HEK293 (cell line): ENCODE measurements at regions of chr2 and their contacts with region 1.

Region 1: GRCh38 chr2:181742922-181743722 is 62.8 kb upstream of the NEUROD1 start:
- H3K4me3 ChIP-seq: no peak overlapping the region
- H3K27ac ChIP-seq: no peak overlapping the region
- H3K4me1 ChIP-seq: no peaks in the 10 kb centered on the region
- CTCF ChIP-seq: peak; percentile 66

Region 2: GRCh38 chr2:181904022-181904632 is 161.0 kb after region 1 on chr2:
- CTCF ChIA-PET with region 1: interaction called, 35 read pairs
- POLR2A ChIA-PET with region 1: no interaction called
- H3K4me3 ChIP-seq: no peak overlapping the region
- H3K27ac ChIP-seq: no peak overlapping the region
- H3K4me1 ChIP-seq: peaks cover 7% of the 10 kb centered on the region; the same call in 1 of the 2 replicates
- CTCF ChIP-seq: no peak

Region 3: DNA sequence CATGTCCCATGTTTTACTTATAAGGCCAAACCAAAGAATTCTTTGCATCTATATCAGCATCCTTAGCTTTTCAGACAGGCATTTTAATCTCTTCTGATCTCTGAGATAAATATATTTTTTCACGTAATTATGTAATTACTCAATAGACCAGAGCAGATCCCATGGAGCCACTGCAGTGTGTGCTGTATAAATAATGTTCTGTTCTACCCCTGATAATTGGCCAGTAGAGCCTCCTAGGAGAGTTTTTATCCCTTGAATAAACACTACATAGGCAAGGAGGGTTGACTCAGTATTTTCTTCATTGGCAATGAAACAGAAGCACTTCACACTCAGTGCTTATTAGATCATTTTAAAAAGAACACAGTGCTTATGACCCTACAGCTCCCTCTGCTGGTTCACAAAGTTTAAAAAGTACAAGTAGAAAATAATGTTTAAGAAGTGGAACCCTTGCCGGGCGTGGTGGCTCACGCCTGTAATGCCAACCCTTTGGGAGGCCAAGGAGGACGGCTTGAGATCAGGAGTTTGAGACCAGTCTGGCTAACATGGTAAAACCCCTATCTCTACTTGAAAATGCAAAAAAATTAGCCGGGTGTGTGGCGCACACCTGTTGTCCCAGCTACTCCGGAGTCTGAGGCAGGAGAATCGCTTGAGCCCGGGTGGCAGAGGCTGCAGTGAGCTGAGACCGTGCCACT is 334.5 kb after region 1 on chr2:
- CTCF ChIA-PET with region 1: interaction called, 30 read pairs
- POLR2A ChIA-PET with region 1: no interaction called
- H3K4me3 ChIP-seq: no peak overlapping the region
- H3K27ac ChIP-seq: no peak overlapping the region
- H3K4me1 ChIP-seq: peaks cover 12% of the 10 kb centered on the region
- CTCF ChIP-seq: peak; percentile 59